Activated CD4-positive, alpha-beta memory T cell treated with anti-CD3 and anti-CD28 coated beads for 36 hours (primary cell): ENCODE measurements at regions of chr12 and their contacts with region 1.

Region 1: DNA sequence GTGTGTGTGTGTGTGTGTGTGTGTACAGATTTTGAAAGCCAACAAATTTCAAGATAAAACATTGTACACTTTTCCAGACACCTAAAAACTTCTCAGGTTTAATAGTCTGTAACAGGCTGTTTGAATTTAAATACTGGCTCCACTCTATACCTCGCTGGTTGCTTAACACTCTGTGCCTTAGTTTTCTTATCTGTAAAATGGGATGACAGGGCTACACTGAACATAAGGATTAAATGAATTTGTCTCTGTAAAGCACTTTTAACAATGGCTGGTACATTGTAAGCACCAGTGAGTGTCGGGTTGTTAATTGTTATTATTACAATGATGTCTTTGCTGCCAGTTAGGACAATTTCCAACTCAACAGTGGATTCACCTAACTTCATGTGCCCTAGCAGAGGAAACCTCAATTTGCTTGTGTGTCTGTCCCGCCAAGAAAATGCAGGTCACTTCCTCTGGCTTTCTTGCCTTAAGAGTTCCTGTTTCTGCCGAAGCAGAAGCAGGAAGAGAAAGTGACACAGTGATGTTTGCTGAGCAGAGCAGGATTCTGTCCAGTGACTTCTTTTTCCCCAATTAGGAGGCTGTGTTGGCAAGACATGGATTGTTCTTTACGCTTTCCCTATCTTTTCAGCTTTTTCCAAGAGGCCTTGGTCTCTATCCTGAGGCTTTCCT is 154.0 kb upstream of the ATP2B1 start:
- DNase-seq: peak; percentile 57
- H3K4me3 Mint-ChIP-seq: peak overlapping the region; percentile 66
- H3K27ac Mint-ChIP-seq: peak overlapping the region; percentile 95
- H3K4me1 Mint-ChIP-seq: peaks cover 67% of the 10 kb centered on the region
- H3K27me3 Mint-ChIP-seq: no peaks in the 10 kb centered on the region

Region 2: DNA sequence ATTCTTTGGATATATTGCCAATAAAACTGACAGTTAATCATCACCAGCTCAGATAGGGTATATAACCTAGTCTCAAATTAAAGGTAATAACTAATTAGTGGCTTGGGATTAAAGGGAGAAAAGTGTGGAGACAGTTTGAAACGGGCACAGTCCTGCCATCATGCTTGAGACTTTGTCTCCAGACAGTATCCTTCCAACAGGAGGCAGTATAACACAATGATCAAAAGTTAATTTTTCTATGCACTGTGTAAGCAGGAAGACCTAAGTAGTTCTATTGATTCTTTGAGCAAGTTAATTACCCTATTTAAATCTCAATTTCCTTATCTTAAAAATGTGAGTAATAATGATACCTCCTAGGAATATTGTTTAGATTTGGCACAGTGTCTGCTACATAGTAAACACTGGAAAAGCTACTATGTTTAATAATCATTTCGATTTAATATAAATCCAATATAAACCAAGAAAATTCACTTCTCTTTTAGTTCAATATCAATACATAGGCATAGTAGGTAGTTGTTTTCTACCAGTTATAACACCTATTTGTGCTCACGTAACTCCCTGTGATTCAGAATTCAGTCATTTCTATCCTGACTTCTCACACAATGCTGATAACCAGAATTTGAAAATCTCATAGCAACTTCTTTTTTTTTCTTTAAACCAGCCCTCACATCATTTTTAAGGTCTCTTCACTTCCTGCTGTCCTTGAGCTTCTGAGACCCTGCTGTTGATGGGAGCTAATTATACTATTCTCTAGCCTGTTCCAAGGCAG is 391.7 kb before region 1 on chr12:
- CTCF ChIA-PET with region 1: no interaction called
- POLR2A ChIA-PET with region 1: no interaction called
- intact Hi-C with region 1: loop called (anchors 5 kb)
- DNase-seq: no peak
- H3K4me3 Mint-ChIP-seq: no peak overlapping the region
- H3K27ac Mint-ChIP-seq: peak overlapping the region; percentile 64
- H3K4me1 Mint-ChIP-seq: peaks cover 58% of the 10 kb centered on the region
- H3K27me3 Mint-ChIP-seq: no peaks in the 10 kb centered on the region

Region 3: GRCh38 chr12:89597770-89598169 is 264.9 kb before region 1 on chr12:
- CTCF ChIA-PET with region 1: interaction called, 3 read pairs
- POLR2A ChIA-PET with region 1: no interaction called
- intact Hi-C with region 1: loop called (anchors 5 kb)
- DNase-seq: no peak
- H3K4me3 Mint-ChIP-seq: no peak overlapping the region
- H3K27ac Mint-ChIP-seq: peak overlapping the region; percentile 33
- H3K4me1 Mint-ChIP-seq: peaks cover 24% of the 10 kb centered on the region
- H3K27me3 Mint-ChIP-seq: no peaks in the 10 kb centered on the region

Region 4: GRCh38 chr12:89636052-89636775 is 226.4 kb before region 1 on chr12:
- CTCF ChIA-PET with region 1: no interaction called
- POLR2A ChIA-PET with region 1: no interaction called
- intact Hi-C with region 1: loop called (anchors 1 kb)
- DNase-seq: peak; percentile 45
- H3K4me3 Mint-ChIP-seq: no peak overlapping the region
- H3K27ac Mint-ChIP-seq: peak overlapping the region; percentile 35
- H3K4me1 Mint-ChIP-seq: peaks cover 15% of the 10 kb centered on the region
- H3K27me3 Mint-ChIP-seq: no peaks in the 10 kb centered on the region

Region 5: DNA sequence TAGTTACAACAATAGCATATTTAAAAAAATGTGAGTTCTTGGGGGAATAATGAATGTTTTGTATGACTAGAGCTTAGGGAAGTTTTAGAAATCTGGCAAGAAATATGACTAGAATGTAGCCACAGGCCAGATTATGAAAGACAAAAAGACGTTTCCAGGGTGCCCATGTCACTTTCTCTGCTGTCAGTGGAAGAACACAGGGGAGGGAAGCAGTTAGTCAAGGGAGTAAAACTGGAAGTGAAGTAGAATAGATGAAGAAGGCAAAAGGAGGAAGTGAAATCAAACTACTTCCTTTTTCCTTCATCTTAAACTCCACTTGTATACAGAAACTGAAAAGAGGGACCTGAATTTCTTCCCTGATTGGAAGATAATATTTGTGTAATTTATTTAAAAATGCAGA is 72.8 kb before region 1 on chr12:
- CTCF ChIA-PET with region 1: no interaction called
- POLR2A ChIA-PET with region 1: no interaction called
- intact Hi-C with region 1: no loop called
- DNase-seq: no peak
- H3K4me3 Mint-ChIP-seq: no peak overlapping the region
- H3K27ac Mint-ChIP-seq: no peak overlapping the region
- H3K4me1 Mint-ChIP-seq: no peaks in the 10 kb centered on the region
- H3K27me3 Mint-ChIP-seq: no peaks in the 10 kb centered on the region

Region 6: DNA sequence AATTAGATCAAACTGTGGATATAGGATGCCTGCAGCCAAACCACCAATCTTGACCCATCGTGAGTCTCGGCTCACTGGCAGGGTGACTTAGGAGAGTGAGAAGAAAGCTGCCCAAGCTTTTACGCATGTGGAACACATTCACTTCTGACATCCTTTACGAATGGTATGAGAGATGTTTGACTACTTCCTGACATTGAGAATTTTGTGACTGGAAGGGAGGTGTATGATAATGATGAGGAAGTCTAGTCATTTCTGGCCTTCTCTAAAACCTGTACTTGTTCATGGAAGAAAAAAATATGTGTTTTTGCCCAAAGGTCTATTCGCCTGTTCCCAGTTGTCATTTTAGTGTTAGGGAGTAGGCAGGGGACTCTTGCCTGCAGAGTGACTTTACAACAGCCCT is 73.2 kb after region 1 on chr12:
- CTCF ChIA-PET with region 1: no interaction called
- POLR2A ChIA-PET with region 1: no interaction called
- intact Hi-C with region 1: loop called (anchors 1 kb)
- DNase-seq: peak; percentile 28
- H3K4me3 Mint-ChIP-seq: peak overlapping the region; percentile 5
- H3K27ac Mint-ChIP-seq: peak overlapping the region; percentile 55
- H3K4me1 Mint-ChIP-seq: peaks cover 38% of the 10 kb centered on the region
- H3K27me3 Mint-ChIP-seq: no peaks in the 10 kb centered on the region

Region 7: GRCh38 chr12:90042920-90043641 is 180.4 kb after region 1 on chr12:
- CTCF ChIA-PET with region 1: no interaction called
- POLR2A ChIA-PET with region 1: no interaction called
- intact Hi-C with region 1: loop called (anchors 5 kb)
- DNase-seq: no peak
- H3K4me3 Mint-ChIP-seq: no peak overlapping the region
- H3K27ac Mint-ChIP-seq: no peak overlapping the region
- H3K4me1 Mint-ChIP-seq: peaks cover 9% of the 10 kb centered on the region
- H3K27me3 Mint-ChIP-seq: no peaks in the 10 kb centered on the region